Tibial artery (tissue), 4 donors: ENCODE measurements at regions of chr16 and their contacts with region 1.

Region 1: DNA sequence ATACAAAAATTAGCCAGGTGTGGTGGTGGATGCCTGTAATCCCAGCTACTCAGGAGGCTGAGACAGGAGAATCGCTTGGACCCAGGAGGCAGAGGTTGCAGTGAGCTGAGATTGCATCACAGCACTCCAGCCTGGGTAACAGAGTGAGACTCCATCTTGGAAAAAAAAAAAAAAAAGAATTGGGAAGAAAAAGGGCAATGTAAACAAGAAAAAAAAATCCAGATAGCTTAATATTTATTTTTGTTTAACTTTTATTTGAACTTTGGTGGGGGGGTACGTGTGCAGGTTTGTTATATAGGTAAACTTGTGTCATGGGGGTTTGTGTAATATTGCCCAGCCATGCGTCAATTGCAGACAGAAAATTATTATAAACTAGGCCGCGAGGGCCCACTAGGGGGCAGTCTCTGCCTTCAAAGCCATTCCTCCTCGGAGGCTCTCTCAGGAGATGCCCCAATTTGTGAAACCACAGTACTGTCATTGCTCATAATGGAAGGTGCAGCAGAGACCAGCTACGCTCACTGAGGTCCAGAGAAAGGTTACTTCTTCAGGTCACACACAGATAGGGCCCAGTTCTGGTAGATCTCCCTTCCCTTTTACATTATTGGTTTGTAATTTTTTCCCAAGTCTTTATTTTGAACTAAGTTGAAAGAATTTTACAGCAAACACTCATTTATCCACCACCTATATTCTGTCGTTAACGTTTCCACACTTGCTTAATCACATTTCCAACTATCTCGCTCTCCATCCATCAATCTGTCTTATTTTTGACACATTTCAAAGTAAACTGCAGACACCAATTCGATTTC is 206.2 kb downstream of the PRKCB start:
- DNase-seq: peak in 1 of 2 donors; percentile 35
- H3K4me3 ChIP-seq: no peak overlapping the region
- H3K27ac ChIP-seq: no peak overlapping the region
- H3K4me1 ChIP-seq: no peaks in the 10 kb centered on the region
- H3K27me3 ChIP-seq: peaks cover 0 to 5% of the 10 kb centered on the region in 2 donors
- CTCF ChIP-seq: peak; percentile 34 to 61

Region 2: DNA sequence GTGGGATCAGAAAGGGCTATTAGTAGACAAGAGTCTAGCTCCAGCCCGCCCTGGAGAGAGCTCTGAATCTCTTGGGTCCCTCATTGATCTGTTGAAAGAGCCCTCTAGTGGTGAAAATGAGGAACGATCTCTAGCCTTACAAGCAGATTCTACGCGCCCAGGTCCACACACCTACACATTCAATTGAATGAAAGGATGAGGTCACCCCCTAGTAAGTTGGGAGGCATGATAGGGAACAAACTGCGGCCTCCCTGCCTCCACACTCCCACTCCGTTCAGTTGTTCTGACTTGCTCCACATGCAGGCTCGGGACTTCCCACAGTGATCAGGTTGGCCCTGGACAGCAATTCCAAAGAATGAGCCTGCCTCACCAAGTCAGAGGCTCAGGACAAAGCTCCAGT is 211.2 kb after region 1 on chr16:
- intact Hi-C with region 1: loop called (anchors 5 kb)
- DNase-seq: no peak
- H3K4me3 ChIP-seq: no peak overlapping the region
- H3K27ac ChIP-seq: no peak overlapping the region
- H3K4me1 ChIP-seq: no peaks in the 10 kb centered on the region
- H3K27me3 ChIP-seq: peaks cover 0 to 32% of the 10 kb centered on the region in 2 donors
- CTCF ChIP-seq: peak; percentile 34 to 40

Region 3: DNA sequence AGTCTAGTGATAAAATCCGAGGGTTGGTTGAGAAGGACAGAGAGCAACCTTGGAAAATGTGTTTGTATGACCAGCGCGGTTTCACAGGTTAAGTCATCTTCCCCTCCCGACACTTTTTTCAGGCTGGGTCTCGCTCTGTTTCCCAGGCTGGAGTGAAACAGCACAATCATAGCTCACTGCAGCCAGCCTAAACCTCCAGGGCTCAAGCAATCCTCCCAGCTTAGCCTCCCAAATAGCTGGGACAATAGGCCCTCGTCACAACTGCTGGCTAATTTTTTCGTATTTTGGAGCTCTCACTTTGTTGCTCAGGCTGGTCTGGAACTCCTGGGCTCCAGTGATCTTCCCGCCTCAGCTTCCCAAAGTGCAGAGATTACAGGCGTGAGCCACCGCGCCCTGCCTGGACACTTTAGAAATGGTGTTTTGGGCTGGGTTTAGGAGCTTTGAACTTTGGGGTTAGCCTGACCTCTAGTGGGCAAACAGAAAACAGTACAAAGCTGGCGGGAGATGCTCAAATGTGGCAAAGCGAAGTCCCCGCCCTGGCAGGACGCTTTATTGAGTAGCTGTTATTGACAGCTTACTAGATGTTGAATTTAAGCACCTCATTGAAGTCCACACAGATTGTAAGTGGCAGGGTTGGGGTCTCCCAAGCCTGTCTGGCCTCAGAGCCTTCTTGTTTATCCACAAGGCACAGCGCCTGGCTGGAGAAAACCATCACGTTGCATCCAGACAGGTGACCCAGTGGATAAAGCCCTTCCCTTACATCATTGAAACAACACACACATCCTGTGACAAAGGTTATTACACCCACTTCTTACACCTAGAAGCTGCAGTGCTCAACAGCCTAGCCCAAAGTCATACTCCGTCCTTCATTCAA is 462.7 kb after region 1 on chr16:
- intact Hi-C with region 1: loop called (anchors 5 kb)
- DNase-seq: peak in 1 of 2 donors; percentile 28
- H3K4me3 ChIP-seq: no peak overlapping the region
- H3K27ac ChIP-seq: no peak overlapping the region
- H3K4me1 ChIP-seq: peaks cover 0 to 8% (median 0%) of the 10 kb centered on the region in 4 donors
- H3K27me3 ChIP-seq: peaks cover 0 to 13% of the 10 kb centered on the region in 2 donors
- CTCF ChIP-seq: peak; percentile 64 to 67